A673 (cell line): ENCODE measurements at regions of chr12 and their contacts with region 1.

Region 1: GRCh38 chr12:117459229-117459628 is 97.8 kb upstream of the NOS1 start:
- DNase-seq: no peak
- H3K4me3 ChIP-seq: no peak overlapping the region
- H3K27ac ChIP-seq: no peak overlapping the region
- H3K4me1 ChIP-seq: no peaks in the 10 kb centered on the region
- H3K27me3 ChIP-seq: peaks cover 3% of the 10 kb centered on the region
- CTCF ChIP-seq: no peak

Region 2: DNA sequence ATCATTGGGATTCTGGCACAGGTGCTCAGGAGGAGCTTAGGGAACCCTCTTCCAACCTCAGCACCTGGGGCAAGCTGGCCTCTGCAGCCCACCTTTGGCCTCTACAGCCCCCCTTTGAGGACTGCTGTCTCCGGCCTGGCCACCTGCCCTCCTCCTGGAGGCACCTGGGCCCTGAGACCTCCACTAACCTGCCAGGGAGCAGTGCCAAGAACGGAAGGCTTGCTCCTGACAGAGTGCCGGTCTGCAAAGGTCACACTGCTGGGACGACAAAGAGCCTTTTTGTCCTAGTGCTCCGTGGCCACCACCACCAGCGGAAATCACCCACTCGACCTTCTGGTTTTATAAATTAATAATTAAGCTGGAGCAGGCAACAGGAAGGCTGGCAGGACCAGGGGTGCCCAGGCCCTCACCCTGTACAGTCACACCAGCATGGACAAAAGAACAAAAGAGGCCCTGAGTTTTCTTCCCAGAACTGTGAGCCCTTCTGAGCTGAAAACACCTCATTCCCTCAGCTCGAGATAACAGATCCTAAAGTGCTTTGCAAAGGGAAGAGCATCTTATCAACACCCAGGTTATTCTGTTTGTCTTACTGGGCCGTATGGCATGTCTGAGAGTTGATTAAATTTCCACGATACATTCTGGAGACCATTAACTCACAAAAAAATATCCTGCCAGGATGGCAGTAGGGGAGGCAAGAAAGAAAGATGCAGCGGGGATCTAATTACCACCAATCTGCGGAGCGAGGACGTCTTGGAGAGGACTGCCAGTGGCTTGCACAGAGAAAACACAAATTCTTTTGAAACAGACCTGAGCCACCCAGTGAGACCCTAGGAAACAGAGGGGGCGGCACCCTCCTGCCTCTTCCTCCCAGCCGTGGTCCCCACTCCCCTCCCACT is 368.2 kb before region 1 on chr12:
- CTCF ChIA-PET with region 1: no interaction called
- POLR2A ChIA-PET with region 1: no interaction called
- intact Hi-C with region 1: no loop called
- DNase-seq: no peak
- H3K4me3 ChIP-seq: no peak overlapping the region
- H3K27ac ChIP-seq: no peak overlapping the region
- H3K4me1 ChIP-seq: no peaks in the 10 kb centered on the region
- H3K27me3 ChIP-seq: peaks cover 19% of the 10 kb centered on the region
- CTCF ChIP-seq: no peak

Region 3: GRCh38 chr12:117202033-117202432 is 257.2 kb before region 1 on chr12:
- CTCF ChIA-PET with region 1: no interaction called
- POLR2A ChIA-PET with region 1: no interaction called
- intact Hi-C with region 1: no loop called
- DNase-seq: no peak
- H3K4me3 ChIP-seq: no peak overlapping the region
- H3K27ac ChIP-seq: no peak overlapping the region
- H3K4me1 ChIP-seq: no peaks in the 10 kb centered on the region
- H3K27me3 ChIP-seq: no peaks in the 10 kb centered on the region
- CTCF ChIP-seq: no peak

Region 4: GRCh38 chr12:117321572-117321971 is 137.7 kb before region 1 on chr12:
- CTCF ChIA-PET with region 1: no interaction called
- POLR2A ChIA-PET with region 1: no interaction called
- intact Hi-C with region 1: no loop called
- DNase-seq: no peak
- H3K4me3 ChIP-seq: no peak overlapping the region
- H3K27ac ChIP-seq: no peak overlapping the region
- H3K4me1 ChIP-seq: no peaks in the 10 kb centered on the region
- H3K27me3 ChIP-seq: no peaks in the 10 kb centered on the region
- CTCF ChIP-seq: no peak

Region 5: DNA sequence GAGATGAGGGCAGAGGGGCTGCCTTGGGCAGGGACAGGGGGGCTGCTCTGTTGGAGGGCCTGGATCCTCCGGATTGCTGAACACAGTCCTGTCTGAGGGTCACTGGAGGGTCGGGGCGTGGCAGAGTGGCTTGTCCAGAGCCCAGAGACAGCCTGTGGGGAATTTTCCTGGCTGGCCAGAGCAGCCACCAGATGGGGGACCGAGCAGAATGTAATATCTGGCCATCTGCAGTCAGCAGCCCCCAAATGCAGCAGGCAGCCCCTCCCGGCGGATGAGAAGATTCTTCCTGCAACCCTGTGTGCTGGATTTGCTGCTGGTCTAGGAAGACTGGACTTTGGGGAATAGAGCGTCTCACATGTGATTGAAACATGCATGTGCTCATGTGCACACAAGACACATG is 74.5 kb before region 1 on chr12:
- CTCF ChIA-PET with region 1: no interaction called
- POLR2A ChIA-PET with region 1: no interaction called
- intact Hi-C with region 1: loop called (anchors 2 kb)
- DNase-seq: no peak
- H3K4me3 ChIP-seq: no peak overlapping the region
- H3K27ac ChIP-seq: no peak overlapping the region
- H3K4me1 ChIP-seq: no peaks in the 10 kb centered on the region
- H3K27me3 ChIP-seq: no peaks in the 10 kb centered on the region
- CTCF ChIP-seq: no peak